Dorsolateral prefrontal cortex (tissue), 120 donors: ENCODE measurements at regions of chr3 and their contacts with region 1.

Region 1: DNA sequence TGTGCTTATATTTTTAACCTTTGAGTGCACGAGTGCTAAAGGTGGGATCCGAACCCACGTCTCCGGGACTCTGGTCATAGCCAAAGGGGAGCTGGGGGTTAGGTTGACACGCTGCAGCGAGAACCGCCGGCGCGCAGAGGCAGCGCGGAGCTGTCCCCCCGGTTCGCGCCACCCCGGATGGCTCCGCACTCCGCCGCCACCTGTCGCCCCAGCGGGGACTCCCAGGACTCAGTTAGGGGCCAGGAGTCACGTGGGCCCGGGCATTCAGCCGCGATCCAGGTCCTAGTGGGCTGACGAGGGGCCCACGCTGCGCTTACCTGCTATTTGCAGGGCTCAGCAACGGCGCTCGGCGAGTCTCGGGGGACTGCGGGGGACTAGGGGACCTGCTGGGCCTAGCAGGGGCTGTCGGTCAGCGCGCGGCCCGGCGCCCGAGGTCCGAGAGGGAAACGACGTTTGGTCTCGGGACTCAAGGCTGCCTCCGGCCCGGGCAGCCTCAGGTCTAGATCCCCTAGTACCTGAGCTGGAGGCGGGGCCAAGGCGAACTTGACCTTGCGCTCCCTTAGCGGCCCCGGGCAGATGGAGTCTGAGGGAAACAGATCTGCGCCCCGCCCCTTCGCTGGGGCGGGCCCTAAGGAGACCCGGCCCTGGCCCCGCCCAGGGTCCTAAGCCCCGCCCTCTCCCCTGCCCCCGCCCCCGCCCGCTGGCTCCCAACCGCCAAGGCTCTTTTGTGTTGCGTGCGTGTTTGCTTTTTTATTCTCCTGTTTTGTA is at the start of gene NMNAT3:
- DNase-seq: peak; percentile 65 to 85 (median 76)
- H3K4me3 ChIP-seq: peak within 1 kb of the TSS; percentile 74 to 99 (median 91)
- H3K27ac ChIP-seq: peak within 1 kb of the TSS in 24 of 59 donors; percentile 13 to 84 (median 54)
- H3K27me3 ChIP-seq: no peaks in the 10 kb centered on the region
- CTCF ChIP-seq: peak in 13 of 56 donors; percentile 3 to 33 (median 10)
- total RNA-seq, gene NMNAT3: 8.1 to 27.6 (median 16.2) TPM

Region 2: DNA sequence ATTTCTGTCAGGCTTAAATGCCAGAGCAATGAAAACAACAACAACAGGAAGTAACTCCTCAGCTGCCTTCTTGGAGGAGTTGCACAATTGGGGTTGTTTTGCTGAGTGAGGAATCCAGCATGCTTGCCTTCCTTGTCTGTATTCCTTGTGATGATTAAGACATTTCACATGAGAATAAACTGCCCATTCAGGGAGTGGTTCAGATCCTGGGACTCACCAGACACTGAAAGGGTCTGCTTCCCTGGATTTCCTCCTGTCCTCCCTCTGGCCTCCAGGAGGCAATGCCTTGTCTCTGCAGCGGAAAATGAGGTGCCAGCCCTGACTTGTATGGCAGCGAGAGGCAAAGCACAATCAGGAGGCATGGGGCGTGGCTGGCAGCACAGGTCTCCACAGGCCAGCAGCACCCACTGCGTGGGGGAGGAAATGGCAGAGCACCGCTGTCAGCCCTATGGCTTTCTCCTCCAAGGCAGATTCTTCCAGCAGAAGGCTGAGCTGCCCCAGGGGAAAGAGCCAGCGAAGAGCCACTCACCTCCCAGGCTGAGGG is 242.7 kb before region 1 on chr3:
- intact Hi-C with region 1: loop called in 1 of 2 experiments (anchors 10 kb)
- DNase-seq: no peak
- H3K4me3 ChIP-seq: no peak overlapping the region
- H3K27ac ChIP-seq: no peak overlapping the region
- H3K27me3 ChIP-seq: no peaks in the 10 kb centered on the region
- CTCF ChIP-seq: no peak